Esophagus squamous epithelium (tissue), 5 donors: ENCODE measurements at regions of chr14 and their contacts with region 1.

Region 1: DNA sequence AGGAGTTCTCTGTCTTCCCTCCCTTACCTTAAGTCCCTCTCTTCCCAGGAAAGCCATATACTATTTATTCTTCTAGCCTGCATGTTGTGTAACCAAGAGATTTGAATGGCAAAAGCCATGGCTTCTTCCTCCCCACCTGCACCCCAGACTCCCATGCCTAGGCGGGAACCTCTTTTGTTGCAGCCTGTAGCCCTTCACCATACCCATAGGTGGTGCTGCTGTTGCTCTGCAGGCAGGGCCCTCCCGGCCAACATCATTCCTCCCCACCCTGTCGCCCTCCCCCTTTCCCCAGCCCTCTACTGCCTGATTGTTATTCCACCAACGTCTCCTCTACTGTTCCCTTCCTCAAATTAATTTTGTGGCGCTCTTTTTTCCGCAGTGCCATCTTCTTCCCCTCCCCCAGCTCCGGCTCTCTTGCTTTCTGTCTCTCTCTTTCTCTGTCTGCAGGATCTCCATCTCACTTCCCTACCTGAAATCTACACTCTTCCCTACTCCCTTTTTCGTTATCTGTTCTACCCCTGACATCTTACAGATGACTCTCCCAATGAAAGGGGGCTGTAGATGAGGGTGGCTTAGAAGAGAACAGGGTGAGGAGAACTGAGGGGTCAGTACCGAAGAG is 13.8 kb downstream of the NGDN start:
- DNase-seq: no peak
- H3K4me3 ChIP-seq: no peak overlapping the region
- H3K27ac ChIP-seq: no peak overlapping the region
- H3K4me1 ChIP-seq: no peaks in the 10 kb centered on the region
- H3K27me3 ChIP-seq: no peaks in the 10 kb centered on the region
- CTCF ChIP-seq: peak in 1 of 6 experiments; percentile 19
- POLR2A ChIP-seq: no peak

Region 2: GRCh38 chr14:23562268-23563203 is 79.2 kb after region 1 on chr14:
- intact Hi-C with region 1: loop called (anchors 5 kb)
- DNase-seq: no peak
- H3K4me3 ChIP-seq: no peak overlapping the region
- H3K27ac ChIP-seq: peak overlapping the region in 1 of 4 donors; percentile 21
- H3K4me1 ChIP-seq: peaks cover 8 to 25% (median 10%) of the 10 kb centered on the region in 3 donors
- H3K27me3 ChIP-seq: no peaks in the 10 kb centered on the region
- CTCF ChIP-seq: peak; percentile 78 to 92 (median 86)
- POLR2A ChIP-seq: no peak

Region 3: DNA sequence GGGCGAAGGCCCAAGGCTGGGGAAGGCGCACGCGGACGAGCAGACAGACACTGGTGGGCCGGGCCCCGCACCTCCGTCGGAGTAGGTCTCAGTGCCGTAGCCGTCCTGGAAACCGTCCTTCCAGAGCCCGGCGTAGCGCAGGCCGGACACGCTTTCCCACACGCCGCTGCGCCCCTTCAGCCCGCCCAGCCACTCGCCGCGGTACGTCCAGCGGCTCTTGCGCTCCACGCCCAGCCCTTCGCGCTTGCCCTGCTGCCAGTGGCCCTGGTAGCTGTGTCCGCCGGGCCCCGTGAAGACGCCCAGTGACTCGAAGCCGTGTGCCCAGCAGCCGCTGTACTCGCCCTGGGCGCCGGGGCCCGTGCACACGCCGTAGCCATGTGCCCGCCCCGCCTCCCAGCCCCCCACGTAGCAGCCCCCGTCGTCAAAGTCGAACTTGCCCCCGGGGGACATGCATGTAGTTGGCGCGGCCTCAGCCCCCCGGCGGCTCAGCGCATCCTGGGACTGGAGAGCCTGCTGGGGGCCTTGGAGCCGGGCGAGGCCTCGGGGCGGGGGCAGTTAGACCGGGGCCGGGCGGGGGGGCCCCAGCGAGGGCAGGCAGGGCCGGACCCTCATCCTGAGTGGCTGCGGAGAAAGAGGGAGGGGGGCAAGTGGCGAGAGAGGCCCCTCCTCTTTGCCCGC is 93.8 kb after region 1 on chr14:
- intact Hi-C with region 1: no loop called
- DNase-seq: no peak
- H3K4me3 ChIP-seq: peak overlapping the region in 3 of 4 donors; percentile 8 to 59 (median 26)
- H3K27ac ChIP-seq: no peak overlapping the region
- H3K4me1 ChIP-seq: peaks cover 14 to 34% (median 18%) of the 10 kb centered on the region in 3 donors
- H3K27me3 ChIP-seq: peaks cover 13 to 87% (median 21%) of the 10 kb centered on the region in 4 donors
- CTCF ChIP-seq: no peak
- POLR2A ChIP-seq: no peak